ENCODE measurements at regions of chr17 and their contacts with region 1.

Region 1: DNA sequence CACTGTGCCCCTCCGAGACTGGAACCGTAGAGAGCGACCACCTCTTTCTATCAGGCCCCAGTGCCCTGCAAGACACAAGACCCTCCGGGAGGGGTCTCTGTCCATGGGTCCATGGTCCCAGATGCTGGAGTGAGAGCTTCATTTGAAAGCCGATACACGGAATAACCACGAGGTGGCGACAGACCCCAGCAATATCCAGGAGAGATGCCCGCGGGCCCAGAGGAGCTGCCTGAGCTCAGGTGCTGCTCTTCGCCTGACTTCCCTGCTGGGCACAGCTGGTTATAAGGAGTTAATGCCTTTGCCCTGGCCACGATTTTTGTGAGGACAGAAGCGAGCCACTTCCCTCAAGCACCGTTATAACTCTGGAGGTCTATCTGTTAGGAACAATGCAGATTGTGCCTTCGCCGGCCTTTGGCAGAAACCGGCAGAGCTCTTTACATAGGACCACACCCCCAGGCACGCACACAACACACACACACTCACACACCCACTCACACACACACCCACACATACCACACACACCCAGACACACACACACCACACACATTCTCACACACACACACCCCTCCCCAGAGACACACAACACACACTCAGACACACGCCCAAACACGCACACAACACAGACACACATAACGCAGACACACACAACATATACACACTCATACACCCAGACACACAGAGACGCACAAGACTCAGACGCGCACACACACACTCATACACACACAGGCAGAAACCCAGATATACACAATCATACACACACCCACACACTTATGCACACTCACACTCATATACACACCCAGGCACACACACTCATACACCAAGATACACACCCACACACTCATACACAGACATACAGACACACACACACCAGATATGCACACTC is 436.4 kb downstream of the SOX9 start:
- DNase-seq: peak in 31 of 35 experiments; percentile 8 to 67 (median 35)
- ATAC-seq: peak; percentile 27 to 51 (median 44)
- H3K4me3 ChIP-seq: no peak overlapping the region
- H3K4me3 Mint-ChIP-seq: no peak overlapping the region
- H3K27ac ChIP-seq: no peak overlapping the region
- H3K27ac Mint-ChIP-seq: no peak overlapping the region
- H3K4me1 ChIP-seq: peaks cover 0 to 4% of the 10 kb centered on the region in 2 experiments
- H3K4me1 Mint-ChIP-seq: peaks cover 0 to 2% (median 0%) of the 10 kb centered on the region in 3 donors
- H3K27me3 ChIP-seq: peaks cover 0 to 7% of the 10 kb centered on the region in 2 experiments
- H3K27me3 Mint-ChIP-seq: peaks cover 1 to 4% of the 10 kb centered on the region in 2 donors

Region 2: GRCh38 chr17:72884066-72884465 is 326.9 kb after region 1 on chr17:
- CTCF ChIA-PET with region 1: no interaction called
- POLR2A ChIA-PET with region 1: interaction called in 1 of 2 experiments, 11 read pairs
- DNase-seq: no peak
- ATAC-seq: no peak
- H3K4me3 ChIP-seq: no peak overlapping the region
- H3K4me3 Mint-ChIP-seq: no peak overlapping the region
- H3K27ac ChIP-seq: no peak overlapping the region
- H3K27ac Mint-ChIP-seq: no peak overlapping the region
- H3K4me1 ChIP-seq: no peaks in the 10 kb centered on the region
- H3K4me1 Mint-ChIP-seq: no peaks in the 10 kb centered on the region
- H3K27me3 ChIP-seq: no peaks in the 10 kb centered on the region
- H3K27me3 Mint-ChIP-seq: no peaks in the 10 kb centered on the region

Region 3: DNA sequence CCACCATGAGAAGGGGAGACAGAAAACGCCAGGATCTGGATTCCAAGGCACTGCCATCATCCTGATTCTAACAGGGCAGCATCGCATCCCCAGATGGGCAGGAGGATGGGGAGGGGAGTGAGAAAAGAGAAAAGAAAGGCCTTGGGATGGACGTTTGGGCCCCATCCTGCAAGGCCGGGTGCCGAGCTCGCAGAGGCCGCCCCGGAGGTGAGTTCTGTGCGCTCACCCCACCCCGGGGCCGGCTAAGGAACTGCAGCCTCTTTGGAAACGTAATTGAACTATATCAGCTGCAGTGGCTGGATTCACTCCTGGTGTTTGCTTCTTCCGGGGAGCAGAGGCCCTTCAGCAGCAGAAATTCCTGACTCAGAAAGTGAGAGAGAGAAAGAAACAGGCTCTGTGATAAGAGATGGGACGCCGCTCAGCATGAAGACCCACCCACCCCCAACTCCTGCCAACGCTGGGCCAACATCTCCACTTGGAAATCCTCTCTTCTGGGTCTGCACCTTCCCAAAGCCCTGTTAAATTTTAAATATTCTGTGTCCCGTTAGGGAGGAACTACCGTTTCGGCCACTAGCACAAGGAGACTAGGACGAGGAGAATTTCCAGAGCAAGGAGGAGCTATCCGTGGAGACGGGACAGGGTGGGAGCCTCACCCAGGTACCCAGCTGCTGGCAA is 599.1 kb after region 1 on chr17:
- CTCF ChIA-PET with region 1: interaction called, 6 to 10 read pairs
- POLR2A ChIA-PET with region 1: no interaction called
- DNase-seq: peak in 34 of 35 experiments; percentile 7 to 62 (median 35)
- ATAC-seq: peak; percentile 73 to 85 (median 82)
- H3K4me3 ChIP-seq: no peak overlapping the region
- H3K4me3 Mint-ChIP-seq: no peak overlapping the region
- H3K27ac ChIP-seq: no peak overlapping the region
- H3K27ac Mint-ChIP-seq: no peak overlapping the region
- H3K4me1 ChIP-seq: peaks cover 2 to 5% of the 10 kb centered on the region in 2 experiments
- H3K4me1 Mint-ChIP-seq: peaks cover 7 to 13% (median 12%) of the 10 kb centered on the region in 3 donors
- H3K27me3 ChIP-seq: peaks cover 3 to 31% of the 10 kb centered on the region in 2 experiments
- H3K27me3 Mint-ChIP-seq: peaks cover 17 to 24% of the 10 kb centered on the region in 2 donors